Aorta (tissue), 5 donors: ENCODE measurements at regions of chr10 and their contacts with region 1.

Region 1: GRCh38 chr10:44008270-44008916 is 359.7 kb upstream of the ZNF32 start:
- DNase-seq: peak in 1 of 2 donors; percentile 75
- ATAC-seq: peak; percentile 36
- H3K4me3 ChIP-seq: no peak overlapping the region
- H3K27ac ChIP-seq: peak overlapping the region in 1 of 2 donors; percentile 51
- H3K4me1 ChIP-seq: peaks cover 2 to 3% of the 10 kb centered on the region in 2 donors
- H3K27me3 ChIP-seq: no peaks in the 10 kb centered on the region

Region 2: GRCh38 chr10:43945094-43945730 is 63.2 kb before region 1 on chr10:
- intact Hi-C with region 1: no loop called
- DNase-seq: no peak
- ATAC-seq: no peak
- H3K4me3 ChIP-seq: no peak overlapping the region
- H3K27ac ChIP-seq: no peak overlapping the region
- H3K4me1 ChIP-seq: no peaks in the 10 kb centered on the region
- H3K27me3 ChIP-seq: no peaks in the 10 kb centered on the region

Region 3: DNA sequence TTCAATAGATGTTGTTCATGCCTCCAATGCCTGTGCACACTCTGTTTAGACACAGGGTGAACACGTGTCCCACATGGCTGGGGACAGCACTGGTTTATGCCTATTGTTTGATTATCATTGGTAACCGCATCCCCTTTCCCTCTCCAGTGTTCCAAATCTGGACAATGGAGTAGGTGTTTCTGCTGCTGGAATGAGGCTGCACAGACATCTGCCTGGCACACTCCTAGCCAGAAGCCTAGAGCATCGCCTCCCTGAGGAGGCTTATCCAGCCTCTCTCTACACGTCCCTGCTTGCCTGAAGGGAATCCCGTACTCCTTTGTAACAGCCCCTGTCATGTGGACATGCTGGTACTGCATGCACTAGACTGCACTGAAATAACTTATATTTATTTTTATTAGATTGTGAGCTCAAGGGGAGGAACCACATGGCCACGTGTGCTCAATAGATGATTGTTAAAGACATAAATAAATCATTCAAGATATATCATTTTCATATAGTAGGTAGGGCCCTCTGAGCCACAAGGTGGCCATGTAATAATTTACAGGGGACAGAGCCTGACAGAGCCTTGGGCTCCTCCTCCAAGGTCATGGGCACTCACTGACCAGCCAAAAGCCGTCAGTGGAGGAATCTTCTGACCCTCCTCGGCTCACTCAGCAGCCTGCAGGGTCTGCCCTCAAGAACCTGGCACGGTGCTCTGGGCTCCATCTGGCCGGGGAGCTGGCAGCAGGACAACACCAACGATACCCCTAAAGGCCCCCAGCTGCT is 48.8 kb before region 1 on chr10:
- intact Hi-C with region 1: no loop called
- DNase-seq: peak in 1 of 2 donors; percentile 59
- ATAC-seq: no peak
- H3K4me3 ChIP-seq: no peak overlapping the region
- H3K27ac ChIP-seq: peak overlapping the region in 1 of 2 donors; percentile 20
- H3K4me1 ChIP-seq: peaks cover 2 to 3% of the 10 kb centered on the region in 2 donors
- H3K27me3 ChIP-seq: no peaks in the 10 kb centered on the region

Region 4: GRCh38 chr10:43970717-43971116 is 37.7 kb before region 1 on chr10:
- intact Hi-C with region 1: loop called in 1 of 2 experiments (anchors 5 kb)
- DNase-seq: peak in 1 of 2 donors; percentile 62
- ATAC-seq: no peak
- H3K4me3 ChIP-seq: no peak overlapping the region
- H3K27ac ChIP-seq: no peak overlapping the region
- H3K4me1 ChIP-seq: no peaks in the 10 kb centered on the region
- H3K27me3 ChIP-seq: no peaks in the 10 kb centered on the region

Region 5: DNA sequence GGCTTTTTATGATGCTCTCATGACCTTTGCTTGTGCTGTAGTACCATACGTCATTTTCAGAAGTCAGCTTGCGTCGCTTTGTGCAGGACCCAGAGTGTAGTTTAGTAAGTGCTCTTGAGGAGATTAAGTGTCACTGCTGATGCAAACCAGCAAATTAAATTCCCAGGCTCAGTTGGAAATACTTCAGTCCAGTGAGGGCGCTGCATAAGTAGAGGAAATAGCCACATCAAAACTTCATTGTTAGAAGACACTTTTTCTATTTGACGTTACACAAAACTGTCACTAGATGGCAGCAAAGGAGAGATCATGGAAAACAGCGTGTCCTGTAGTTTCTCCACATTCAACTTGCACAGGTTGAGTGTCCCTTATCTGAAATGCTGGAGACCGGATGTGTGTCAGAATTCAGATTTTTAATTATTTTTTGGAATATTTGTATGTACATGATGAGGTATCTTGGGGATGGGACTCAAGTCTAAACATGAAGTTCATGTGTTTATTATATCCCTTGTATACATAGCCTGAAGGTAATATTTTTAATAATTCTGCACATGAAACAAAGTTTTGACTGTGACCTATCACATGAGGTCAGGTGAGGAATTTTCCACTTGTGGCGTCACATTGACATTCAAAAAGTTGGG is 1000.2 kb after region 1 on chr10:
- intact Hi-C with region 1: no loop called
- DNase-seq: no peak
- ATAC-seq: peak; percentile 93
- H3K4me3 ChIP-seq: no peak overlapping the region
- H3K27ac ChIP-seq: no peak overlapping the region
- H3K4me1 ChIP-seq: no peaks in the 10 kb centered on the region
- H3K27me3 ChIP-seq: no peaks in the 10 kb centered on the region